Left ventricle myocardium inferior (tissue), 1 donor: ENCODE measurements at regions of chr14 and their contacts with region 1.

Region 1: GRCh38 chr14:57755018-57755530 is 110.8 kb downstream of the SLC35F4 start:
- DNase-seq: no peak
- H3K4me3 ChIP-seq: no peak overlapping the region
- H3K27ac ChIP-seq: no peak overlapping the region
- H3K4me1 ChIP-seq: no peaks in the 10 kb centered on the region
- H3K27me3 ChIP-seq: no peaks in the 10 kb centered on the region
- CTCF ChIP-seq: no peak

Region 2: DNA sequence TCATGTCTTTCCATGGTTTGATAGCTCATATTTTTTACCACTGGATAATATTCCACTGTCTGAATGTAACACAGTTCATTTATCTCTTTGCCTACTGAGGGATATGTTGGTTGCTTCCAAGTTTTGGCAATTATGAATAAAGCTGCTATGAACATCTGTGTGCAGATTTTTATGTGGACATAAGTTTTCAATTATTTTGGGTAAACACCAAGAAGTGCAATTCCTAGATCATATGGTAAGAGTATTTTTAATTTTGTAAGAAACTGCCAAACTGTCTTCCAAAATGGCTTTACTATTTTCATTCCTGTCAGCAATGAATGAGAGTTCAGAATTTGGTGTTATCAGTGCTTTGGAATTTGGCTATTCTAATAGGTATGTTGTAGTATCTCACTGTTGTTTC is 154.6 kb after region 1 on chr14:
- intact Hi-C with region 1: loop called (anchors 10 kb)
- DNase-seq: no peak
- H3K4me3 ChIP-seq: no peak overlapping the region
- H3K27ac ChIP-seq: no peak overlapping the region
- H3K4me1 ChIP-seq: no peaks in the 10 kb centered on the region
- H3K27me3 ChIP-seq: no peaks in the 10 kb centered on the region
- CTCF ChIP-seq: no peak